ENCODE measurements at regions of chr11 and their contacts with region 1.

Region 1: GRCh38 chr11:60363542-60364510 is 14.5 kb upstream of the MS4A7 start:
- DNase-seq: peak; percentile 65
- ATAC-seq: peak; percentile 74
- H3K4me3 Mint-ChIP-seq: peak overlapping the region; percentile 46
- H3K27ac Mint-ChIP-seq: peak overlapping the region; percentile 75
- H3K4me1 Mint-ChIP-seq: peaks cover 57% of the 10 kb centered on the region
- H3K27me3 Mint-ChIP-seq: peaks cover 4% of the 10 kb centered on the region; the same call in 1 of the 2 replicates
- CTCF ChIP-seq: peak; percentile 72

Region 2: DNA sequence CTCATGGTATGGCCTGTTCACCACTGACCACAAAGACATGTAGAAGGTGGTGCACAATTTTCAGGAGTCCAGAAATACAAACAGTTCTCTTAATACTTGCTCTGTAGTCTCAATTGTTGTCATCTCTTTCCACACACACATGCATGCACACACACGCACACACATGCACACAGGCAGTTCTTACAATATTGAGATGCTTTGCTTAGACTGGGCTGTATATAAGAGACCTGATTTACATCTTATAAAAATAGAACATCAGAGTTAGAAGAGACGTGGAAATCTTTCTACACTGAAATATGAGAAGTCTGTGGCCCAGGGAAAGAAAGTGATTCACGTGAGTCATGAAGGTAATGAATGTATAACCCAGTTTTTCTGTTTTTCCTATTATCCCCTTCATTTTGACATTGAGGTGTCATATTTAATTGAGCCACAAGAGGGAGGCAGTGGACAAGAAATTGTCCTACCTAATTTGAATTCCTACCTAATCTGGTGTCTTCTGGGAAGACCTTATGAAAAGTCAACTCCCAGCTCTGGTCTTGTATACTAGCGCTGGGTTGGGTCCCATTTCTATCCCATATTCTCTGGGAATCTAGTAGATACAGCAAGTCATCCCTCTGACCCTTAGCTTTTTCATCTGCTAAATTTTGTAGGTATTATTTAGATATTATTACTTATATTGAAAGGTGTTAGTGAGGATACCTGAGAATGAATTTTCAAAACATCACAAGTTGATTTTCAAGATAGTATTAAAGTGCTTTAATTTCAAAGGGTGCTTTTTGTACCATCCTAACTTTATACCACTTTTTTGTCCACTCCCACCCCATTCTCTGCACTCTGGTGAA is 98.2 kb before region 1 on chr11:
- CTCF ChIA-PET with region 1: interaction called, 15 read pairs
- POLR2A ChIA-PET with region 1: no interaction called
- DNase-seq: no peak
- ATAC-seq: peak; percentile 44
- H3K4me3 Mint-ChIP-seq: no peak overlapping the region
- H3K27ac Mint-ChIP-seq: no peak overlapping the region
- H3K4me1 Mint-ChIP-seq: 0 out of 2 replicates have a peak, but pooled peaks cover 5% of the 10 kb centered on the region
- H3K27me3 Mint-ChIP-seq: no peaks in the 10 kb centered on the region; the same call in 1 of the 2 replicates
- CTCF ChIP-seq: peak; percentile 54

Region 3: DNA sequence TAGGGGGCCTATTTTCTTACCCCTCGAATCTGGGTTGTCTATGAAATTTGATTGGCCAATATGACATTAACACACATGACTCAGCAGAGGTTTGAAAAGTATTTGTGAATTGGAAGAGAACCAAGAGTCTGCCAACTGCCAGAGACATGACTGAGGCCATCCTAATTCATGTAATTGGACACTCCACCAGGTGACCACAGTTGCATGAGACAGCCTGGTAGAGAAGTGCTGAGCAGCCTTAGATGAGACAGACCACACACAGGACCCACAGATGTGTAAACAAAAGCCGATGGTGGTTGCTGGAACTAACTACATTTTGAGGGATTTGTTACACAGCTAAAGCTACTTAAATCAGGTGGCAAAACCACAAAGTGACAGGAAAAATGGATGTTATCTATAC is 64.7 kb after region 1 on chr11:
- CTCF ChIA-PET with region 1: no interaction called
- POLR2A ChIA-PET with region 1: no interaction called
- DNase-seq: no peak
- ATAC-seq: no peak
- H3K4me3 Mint-ChIP-seq: no peak overlapping the region
- H3K27ac Mint-ChIP-seq: no peak overlapping the region
- H3K4me1 Mint-ChIP-seq: peaks cover 8% of the 10 kb centered on the region
- H3K27me3 Mint-ChIP-seq: no peaks in the 10 kb centered on the region
- CTCF ChIP-seq: no peak

Region 4: DNA sequence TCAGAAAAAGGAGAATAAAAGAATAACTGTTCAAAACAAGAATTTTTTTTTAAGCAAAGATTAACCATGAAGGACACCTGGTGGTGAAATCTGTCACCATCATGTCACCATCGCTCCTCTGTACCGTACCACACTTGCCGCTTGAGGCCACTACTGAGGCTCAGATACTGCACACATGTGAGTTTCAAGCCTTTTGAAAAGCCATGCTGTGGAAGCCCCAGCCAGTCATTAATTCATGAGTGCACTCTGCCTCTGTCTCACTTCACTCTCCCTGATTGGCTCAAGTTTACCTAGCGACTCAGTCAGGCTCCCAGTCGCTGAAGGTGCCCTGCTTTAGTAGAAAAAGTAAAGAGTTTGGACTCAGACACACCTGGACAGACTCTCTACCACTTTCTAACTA is 122.2 kb after region 1 on chr11:
- CTCF ChIA-PET with region 1: interaction called, 15 read pairs
- POLR2A ChIA-PET with region 1: no interaction called
- DNase-seq: peak; percentile 57
- ATAC-seq: peak; percentile 99
- H3K4me3 Mint-ChIP-seq: no peak overlapping the region
- H3K27ac Mint-ChIP-seq: 0 out of 2 replicates have a peak overlapping the region, but pooled peaks have one; percentile 22
- H3K4me1 Mint-ChIP-seq: 0 out of 2 replicates have a peak, but pooled peaks cover 3% of the 10 kb centered on the region
- H3K27me3 Mint-ChIP-seq: no peaks in the 10 kb centered on the region
- CTCF ChIP-seq: no peak

Region 5: DNA sequence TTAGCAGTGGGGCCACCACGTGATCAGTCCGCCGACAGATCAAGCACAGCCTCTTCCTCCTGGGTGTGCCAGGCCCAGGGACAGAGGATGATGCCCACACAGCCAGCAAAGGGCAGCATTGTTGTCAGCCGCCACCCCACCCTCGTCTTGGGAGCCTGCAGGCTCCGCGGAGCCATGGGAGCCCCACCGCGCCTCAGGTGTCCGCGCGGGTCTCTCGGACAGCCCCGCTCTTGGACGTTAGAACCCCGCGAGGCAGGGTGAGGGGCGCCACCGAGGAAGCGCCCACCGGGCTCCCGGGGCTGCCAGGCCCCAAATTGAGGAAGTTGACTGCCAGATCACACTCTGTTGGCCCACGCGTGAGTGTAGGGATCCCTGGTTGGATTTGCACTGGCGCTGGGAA is 251.7 kb after region 1 on chr11:
- CTCF ChIA-PET with region 1: interaction called, 32 read pairs
- POLR2A ChIA-PET with region 1: no interaction called
- DNase-seq: no peak
- ATAC-seq: no peak
- H3K4me3 Mint-ChIP-seq: no peak overlapping the region
- H3K27ac Mint-ChIP-seq: no peak overlapping the region
- H3K4me1 Mint-ChIP-seq: no peaks in the 10 kb centered on the region
- H3K27me3 Mint-ChIP-seq: no peaks in the 10 kb centered on the region; the same call in 1 of the 2 replicates
- CTCF ChIP-seq: no peak

Region 6: DNA sequence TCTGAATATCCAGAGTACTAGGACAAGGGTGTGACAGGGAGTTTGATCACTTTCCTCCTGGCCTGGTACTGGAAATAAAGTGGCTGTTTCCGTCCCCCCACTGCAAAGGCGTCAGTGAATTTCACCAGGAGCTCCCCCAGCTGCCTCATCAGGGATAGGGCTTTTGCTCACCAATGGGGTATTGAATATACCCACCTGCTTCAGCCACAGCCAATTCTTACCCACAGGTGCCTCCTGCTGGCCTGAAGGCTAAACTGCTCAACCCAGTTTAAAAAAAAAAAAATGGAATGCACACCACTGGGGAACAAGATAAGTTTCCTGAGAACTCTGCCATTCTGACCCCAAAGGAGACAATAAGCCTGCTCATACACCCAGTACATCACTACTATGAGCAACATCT is 270.3 kb after region 1 on chr11:
- CTCF ChIA-PET with region 1: interaction called, 26 read pairs
- POLR2A ChIA-PET with region 1: no interaction called
- DNase-seq: peak; percentile 57
- ATAC-seq: peak; percentile 99
- H3K4me3 Mint-ChIP-seq: no peak overlapping the region
- H3K27ac Mint-ChIP-seq: no peak overlapping the region
- H3K4me1 Mint-ChIP-seq: no peaks in the 10 kb centered on the region
- H3K27me3 Mint-ChIP-seq: peaks cover 7% of the 10 kb centered on the region; the same call in 1 of the 2 replicates
- CTCF ChIP-seq: peak; percentile 58; the same call in 1 of the 2 replicates

Measured in WTC11 (cell line).